Stomach (tissue), 19 donors: ENCODE measurements at regions of chr1 and their contacts with region 1.

Region 1: DNA sequence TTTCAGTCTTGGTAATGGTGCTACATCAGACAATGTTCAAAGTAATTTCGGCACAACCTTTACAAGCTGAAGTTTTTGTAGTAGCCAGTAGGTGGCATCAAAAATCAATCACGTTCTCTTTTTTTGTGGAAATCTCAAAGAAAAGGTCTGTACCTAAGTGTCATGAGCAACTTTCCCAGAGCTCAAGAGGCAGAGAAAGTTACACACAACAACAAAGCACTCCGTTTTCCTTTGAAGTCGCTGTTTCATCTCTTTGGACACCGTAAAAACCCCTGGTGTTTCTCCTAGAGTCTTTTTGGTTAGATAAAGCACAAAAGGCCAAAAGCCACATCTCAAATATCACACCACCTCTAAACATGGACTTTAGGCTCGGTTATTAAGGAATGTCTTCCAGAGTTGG is 131.6 kb downstream of the LHX8 start:
- DNase-seq: peak in 1 of 2 donors; percentile 62
- H3K4me3 ChIP-seq: no peak overlapping the region
- H3K27ac ChIP-seq: no peak overlapping the region
- H3K4me1 ChIP-seq: no peaks in the 10 kb centered on the region
- H3K27me3 ChIP-seq: no peaks in the 10 kb centered on the region
- CTCF ChIP-seq: peak in 5 of 7 experiments; percentile 25 to 51 (median 47)
- EP300 ChIP-seq: no peak
- POLR2A ChIP-seq: no peak

Region 2: GRCh38 chr1:75220072-75220471 is 45.7 kb before region 1 on chr1:
- intact Hi-C with region 1: no loop called
- DNase-seq: no peak
- H3K4me3 ChIP-seq: no peak overlapping the region
- H3K27ac ChIP-seq: no peak overlapping the region
- H3K4me1 ChIP-seq: no peaks in the 10 kb centered on the region
- H3K27me3 ChIP-seq: no peaks in the 10 kb centered on the region
- CTCF ChIP-seq: no peak
- EP300 ChIP-seq: no peak
- POLR2A ChIP-seq: no peak

Region 3: GRCh38 chr1:75502776-75503175 is 237.0 kb after region 1 on chr1:
- intact Hi-C with region 1: no loop called
- DNase-seq: peak in 1 of 2 donors; percentile 12
- H3K4me3 ChIP-seq: no peak overlapping the region
- H3K27ac ChIP-seq: no peak overlapping the region
- H3K4me1 ChIP-seq: no peaks in the 10 kb centered on the region
- H3K27me3 ChIP-seq: no peaks in the 10 kb centered on the region
- CTCF ChIP-seq: no peak
- EP300 ChIP-seq: no peak
- POLR2A ChIP-seq: no peak

Region 4: DNA sequence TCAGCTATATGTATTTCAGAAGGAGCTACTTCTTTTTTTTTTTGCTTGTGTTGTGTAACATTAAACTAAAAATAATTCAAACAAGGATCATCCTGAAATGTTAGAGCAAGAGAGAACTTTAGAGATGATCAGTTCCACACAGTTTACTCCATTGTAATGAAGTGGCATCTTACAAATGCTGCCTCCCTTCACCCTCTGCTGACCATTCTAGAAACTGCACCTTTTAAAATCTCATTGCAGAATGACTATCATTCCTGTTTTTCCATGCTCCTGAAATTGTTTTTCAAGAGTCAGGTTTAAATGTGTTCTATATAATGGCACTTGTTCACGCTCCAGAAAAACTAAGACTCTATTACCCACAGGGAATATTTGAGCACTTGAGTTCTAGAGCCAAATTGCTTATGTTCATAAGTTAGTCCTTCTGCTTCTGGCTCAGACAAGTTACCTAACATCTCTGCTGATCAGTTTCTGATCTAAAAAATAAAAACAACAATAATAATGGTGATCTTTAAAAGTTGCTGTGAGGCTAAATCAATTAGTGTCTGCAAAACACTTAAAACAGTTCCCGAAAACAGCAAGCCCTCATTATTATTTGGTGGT is 366.7 kb after region 1 on chr1:
- intact Hi-C with region 1: loop called (anchors 5 kb)
- DNase-seq: peak in 1 of 2 donors; percentile 61
- H3K4me3 ChIP-seq: no peak overlapping the region
- H3K27ac ChIP-seq: no peak overlapping the region
- H3K4me1 ChIP-seq: no peaks in the 10 kb centered on the region
- H3K27me3 ChIP-seq: no peaks in the 10 kb centered on the region
- CTCF ChIP-seq: peak in 5 of 7 experiments; percentile 23 to 73 (median 58)
- EP300 ChIP-seq: no peak
- POLR2A ChIP-seq: no peak